Activated CD4-positive, alpha-beta T cell treated with anti-CD3 and anti-CD28 coated beads, Interleukin-2, amount 10 ng/mL, durations not matched to agents 24 days and 14 days (primary cell): ENCODE measurements at regions of chr12 and their contacts with region 1.

Region 1: GRCh38 chr12:113221181-113221997 is at the start of gene TPCN1:
- DNase-seq: peak; percentile 100
- H3K4me3 Mint-ChIP-seq: peak within 1 kb of the TSS; percentile 94
- H3K27ac Mint-ChIP-seq: peak within 1 kb of the TSS; percentile 94
- H3K4me1 Mint-ChIP-seq: peaks cover 31% of the 10 kb centered on the region
- H3K27me3 Mint-ChIP-seq: no peaks in the 10 kb centered on the region
- total RNA-seq, gene TPCN1: 31.0 and 33.7 TPM in 2 replicates

Region 2: DNA sequence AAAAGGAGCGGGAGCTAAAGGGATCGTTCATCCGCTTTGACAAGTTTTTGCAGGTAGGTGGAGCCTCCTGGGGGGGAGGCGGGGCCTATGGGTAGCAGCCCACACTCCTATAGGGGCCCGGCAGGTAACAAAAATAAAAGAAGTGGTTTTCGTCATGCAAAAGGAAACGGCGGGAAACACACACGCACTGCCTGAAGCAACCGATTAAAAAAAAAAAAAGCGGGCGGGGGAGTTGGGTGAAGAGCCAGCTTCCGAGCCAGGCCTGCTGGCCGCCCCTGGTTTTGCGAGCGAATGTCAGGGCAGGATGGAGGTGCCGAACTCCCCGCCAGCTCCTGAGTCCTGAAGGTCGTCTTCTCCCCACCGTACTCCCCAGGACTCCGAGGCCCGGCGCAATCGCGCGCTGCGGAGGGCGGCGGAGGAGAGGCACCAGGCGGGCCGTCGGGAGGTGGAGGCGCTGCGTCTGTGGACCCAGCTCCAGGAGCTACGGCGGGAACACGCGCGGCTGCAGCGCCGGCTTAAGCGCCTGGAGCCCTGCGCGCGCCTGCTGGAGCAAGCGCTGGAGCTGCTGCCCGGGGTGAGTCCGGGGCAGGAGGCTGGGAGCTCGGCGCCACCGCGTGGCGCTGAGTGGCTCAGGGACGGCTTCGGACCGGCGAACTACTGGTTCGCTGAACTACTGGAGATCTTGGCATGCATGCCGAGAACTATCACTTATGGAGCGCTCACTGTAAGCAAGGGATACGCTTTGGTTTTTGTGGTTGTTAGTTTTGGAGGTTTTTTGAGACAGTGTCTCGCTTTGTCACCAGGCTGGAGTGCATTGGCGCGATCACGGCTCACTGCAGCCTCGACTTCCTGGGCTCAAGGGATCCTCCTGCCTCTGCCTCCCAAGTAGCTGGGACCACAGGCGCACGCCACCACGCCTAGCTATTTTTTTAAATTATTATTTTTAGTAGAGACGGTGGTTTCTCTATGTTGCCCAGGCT is 68.3 kb before region 1 on chr12:
- intact Hi-C with region 1: loop called (anchors 2 kb)
- DNase-seq: peak; percentile 86
- H3K4me3 Mint-ChIP-seq: peak overlapping the region; percentile 85
- H3K27ac Mint-ChIP-seq: no peak overlapping the region
- H3K4me1 Mint-ChIP-seq: peaks cover 10% of the 10 kb centered on the region
- H3K27me3 Mint-ChIP-seq: peaks cover 26% of the 10 kb centered on the region

Region 3: DNA sequence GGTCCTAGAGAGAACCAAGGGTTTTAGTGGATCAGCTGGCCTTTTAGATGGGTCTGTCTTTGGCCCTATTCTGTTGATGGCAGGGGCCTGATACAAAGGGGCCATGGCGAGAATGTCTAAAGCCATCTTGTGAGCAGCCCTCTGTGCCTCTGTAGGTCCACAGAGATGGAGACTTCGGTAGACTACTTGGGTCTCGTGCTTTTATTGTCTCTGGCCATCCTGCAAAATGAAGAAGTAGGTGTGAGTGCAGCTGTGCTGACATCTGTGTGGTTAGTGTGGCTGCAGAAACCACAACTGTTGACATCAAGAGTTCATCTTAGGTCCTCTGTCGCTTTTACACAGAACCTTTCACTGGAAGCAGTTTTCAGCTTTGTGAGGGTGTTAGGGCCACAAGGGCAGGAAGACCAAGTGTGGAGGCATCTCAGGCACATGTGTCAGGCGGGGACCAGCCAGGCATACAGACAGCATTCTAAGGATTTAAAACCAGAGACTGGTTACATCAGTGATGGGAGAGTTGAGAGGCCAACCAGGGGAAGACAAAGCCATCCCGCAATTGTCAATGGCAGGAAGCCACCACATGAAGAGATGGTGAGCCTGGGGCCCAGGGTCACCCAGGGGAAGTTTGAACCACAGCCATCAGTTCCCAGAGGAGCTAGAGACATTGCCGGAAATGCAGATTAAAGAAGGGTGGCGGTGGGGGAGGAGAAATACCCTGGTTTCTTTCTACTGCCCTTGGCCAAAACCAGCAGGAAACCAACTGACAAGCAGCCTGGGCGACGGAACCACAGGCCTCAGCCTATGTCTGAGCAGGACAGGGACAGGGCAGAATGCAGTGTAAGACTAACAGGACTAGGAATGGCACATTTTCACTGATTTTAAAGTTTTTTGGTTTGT is 13.1 kb before region 1 on chr12:
- intact Hi-C with region 1: loop called (anchors 1 kb)
- DNase-seq: peak; percentile 92
- H3K4me3 Mint-ChIP-seq: peak overlapping the region; percentile 77
- H3K27ac Mint-ChIP-seq: peak overlapping the region; percentile 97
- H3K4me1 Mint-ChIP-seq: peaks cover 54% of the 10 kb centered on the region
- H3K27me3 Mint-ChIP-seq: no peaks in the 10 kb centered on the region

Region 4: GRCh38 chr12:113334786-113335540 is 113.6 kb after region 1 on chr12 and contains the start of gene SLC8B1:
- intact Hi-C with region 1: loop called (anchors 2 kb)
- DNase-seq: peak; percentile 96
- H3K4me3 Mint-ChIP-seq: peak within 1 kb of the TSS; percentile 97
- H3K27ac Mint-ChIP-seq: peak within 1 kb of the TSS; percentile 78
- H3K4me1 Mint-ChIP-seq: peaks cover 22% of the 10 kb centered on the region
- H3K27me3 Mint-ChIP-seq: no peaks in the 10 kb centered on the region
- total RNA-seq, gene SLC8B1: 19.5 and 20.0 TPM in 2 replicates

Region 5: GRCh38 chr12:113961921-113962710 is 740.7 kb after region 1 on chr12:
- intact Hi-C with region 1: loop called (anchors 1 kb)
- DNase-seq: peak; percentile 85
- H3K4me3 Mint-ChIP-seq: peak overlapping the region; percentile 70
- H3K27ac Mint-ChIP-seq: peak overlapping the region; percentile 94
- H3K4me1 Mint-ChIP-seq: peaks cover 42% of the 10 kb centered on the region
- H3K27me3 Mint-ChIP-seq: no peaks in the 10 kb centered on the region